ENCODE measurements at regions of chr1 and their contacts with region 1.

Region 1: GRCh38 chr1:160006312-160006940 is 25.4 kb downstream of the PIGM start:
- DNase-seq: peak; percentile 28
- ATAC-seq: peak; percentile 95
- H3K4me3 ChIP-seq: no peak overlapping the region
- H3K27ac ChIP-seq: no peak overlapping the region
- H3K4me1 ChIP-seq: no peaks in the 10 kb centered on the region
- H3K27me3 ChIP-seq: peaks cover 2% of the 10 kb centered on the region; the same call in 1 of the 2 replicates
- CTCF ChIP-seq: peak; percentile 97

Region 2: GRCh38 chr1:159780583-159781582 is 225.5 kb before region 1 on chr1 and contains the start of gene DUSP23:
- CTCF ChIA-PET with region 1: interaction called, 4 read pairs
- POLR2A ChIA-PET with region 1: no interaction called
- in situ Hi-C with region 1: no loop called
- intact Hi-C with region 1: loop called (anchors 5 kb)
- DNase-seq: peak; percentile 96
- ATAC-seq: peak; percentile 99
- H3K4me3 ChIP-seq: peak within 1 kb of the TSS; percentile 65 to 66
- H3K27ac ChIP-seq: peak within 1 kb of the TSS; percentile 81
- H3K4me1 ChIP-seq: no peaks in the 10 kb centered on the region
- H3K27me3 ChIP-seq: peaks cover 2% of the 10 kb centered on the region; the same call in 1 of the 2 replicates
- CTCF ChIP-seq: peak; percentile 94
- total RNA-seq, gene DUSP23: 36.1 TPM

Region 3: GRCh38 chr1:159798893-159799292 is 207.5 kb before region 1 on chr1:
- CTCF ChIA-PET with region 1: interaction called, 17 read pairs
- POLR2A ChIA-PET with region 1: no interaction called
- in situ Hi-C with region 1: no loop called
- intact Hi-C with region 1: loop called (anchors 5 kb)
- DNase-seq: peak; percentile 64
- ATAC-seq: peak; percentile 94
- H3K4me3 ChIP-seq: no peak overlapping the region
- H3K27ac ChIP-seq: no peak overlapping the region
- H3K4me1 ChIP-seq: no peaks in the 10 kb centered on the region
- H3K27me3 ChIP-seq: peaks cover 22% of the 10 kb centered on the region
- CTCF ChIP-seq: peak; percentile 83

Region 4: GRCh38 chr1:159891275-159892157 is 114.9 kb before region 1 on chr1:
- CTCF ChIA-PET with region 1: interaction called, 18 read pairs
- POLR2A ChIA-PET with region 1: no interaction called
- in situ Hi-C with region 1: no loop called
- intact Hi-C with region 1: no loop called
- DNase-seq: peak; percentile 87
- ATAC-seq: peak; percentile 99
- H3K4me3 ChIP-seq: no peak overlapping the region
- H3K27ac ChIP-seq: peak overlapping the region; percentile 12; the same call in 1 of the 2 replicates
- H3K4me1 ChIP-seq: no peaks in the 10 kb centered on the region
- H3K27me3 ChIP-seq: no peaks in the 10 kb centered on the region
- CTCF ChIP-seq: peak; percentile 99

Region 5: GRCh38 chr1:159936273-159936904 is 70.0 kb before region 1 on chr1:
- CTCF ChIA-PET with region 1: interaction called, 14 read pairs
- POLR2A ChIA-PET with region 1: no interaction called
- in situ Hi-C with region 1: no loop called
- intact Hi-C with region 1: loop called (anchors 1 kb)
- DNase-seq: peak; percentile 60
- ATAC-seq: peak; percentile 87
- H3K4me3 ChIP-seq: no peak overlapping the region
- H3K27ac ChIP-seq: no peak overlapping the region
- H3K4me1 ChIP-seq: peaks cover 17% of the 10 kb centered on the region
- H3K27me3 ChIP-seq: no peaks in the 10 kb centered on the region
- CTCF ChIP-seq: peak; percentile 97

Region 6: GRCh38 chr1:160078512-160079195 is 72.2 kb after region 1 on chr1:
- CTCF ChIA-PET with region 1: interaction called, 11 read pairs
- POLR2A ChIA-PET with region 1: no interaction called
- in situ Hi-C with region 1: no loop called
- intact Hi-C with region 1: no loop called
- DNase-seq: no peak
- ATAC-seq: peak; percentile 81; the same call in 1 of the 2 replicates
- H3K4me3 ChIP-seq: no peak overlapping the region
- H3K27ac ChIP-seq: no peak overlapping the region
- H3K4me1 ChIP-seq: no peaks in the 10 kb centered on the region
- H3K27me3 ChIP-seq: peaks cover 28% of the 10 kb centered on the region
- CTCF ChIP-seq: peak; percentile 92